ENCODE measurements at regions of chr9 and their contacts with region 1.

Region 1: DNA sequence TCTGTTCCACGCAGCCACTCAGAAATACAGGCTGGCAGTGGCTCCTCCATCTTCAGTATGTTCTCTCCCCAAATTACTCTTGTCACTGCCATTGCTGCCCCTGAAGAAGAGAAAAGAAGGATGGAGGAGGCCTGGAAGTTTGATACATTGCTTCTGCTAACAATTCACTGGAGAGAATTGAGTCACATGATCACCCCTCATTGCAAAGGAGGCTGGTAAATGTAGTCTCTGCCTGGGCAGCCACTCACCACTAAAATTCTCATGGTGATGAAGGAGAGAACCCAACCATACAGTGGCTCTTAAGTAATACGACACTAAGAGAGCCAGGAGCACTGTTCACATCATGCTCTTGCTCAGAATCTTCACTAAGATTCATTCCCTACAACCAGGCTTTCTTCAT is 112.0 kb downstream of the DOCK8 start:
- DNase-seq: no peak
- H3K4me3 ChIP-seq: no peak overlapping the region
- CTCF ChIP-seq: no peak

Region 2: DNA sequence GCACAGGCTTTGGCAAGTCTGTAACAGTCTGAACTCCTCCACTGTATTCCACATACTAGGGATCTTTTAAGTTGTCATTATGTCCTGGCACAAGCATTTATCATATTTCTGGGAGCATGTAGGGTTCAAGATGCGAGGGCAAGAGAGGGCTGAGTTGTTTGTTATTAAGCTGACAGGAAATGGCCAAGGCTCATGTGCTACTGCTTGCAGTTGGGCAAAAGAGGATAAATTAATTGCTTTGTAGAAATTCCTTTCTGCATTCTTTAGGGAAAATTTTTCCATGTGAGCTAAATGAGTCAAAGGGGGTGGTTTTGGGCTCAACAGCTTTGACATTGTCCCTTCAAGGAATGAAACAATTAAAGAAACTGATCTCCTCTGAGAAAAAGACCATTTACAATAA is 76.6 kb before region 1 on chr9:
- in situ Hi-C with region 1: loop called (anchors 5 kb)
- DNase-seq: no peak
- H3K4me3 ChIP-seq: no peak overlapping the region
- CTCF ChIP-seq: no peak

Measured in astrocyte of the cerebellum (primary cell).